Head of caudate nucleus (tissue), 42 donors: ENCODE measurements at regions of chr4 and their contacts with region 1.

Region 1: DNA sequence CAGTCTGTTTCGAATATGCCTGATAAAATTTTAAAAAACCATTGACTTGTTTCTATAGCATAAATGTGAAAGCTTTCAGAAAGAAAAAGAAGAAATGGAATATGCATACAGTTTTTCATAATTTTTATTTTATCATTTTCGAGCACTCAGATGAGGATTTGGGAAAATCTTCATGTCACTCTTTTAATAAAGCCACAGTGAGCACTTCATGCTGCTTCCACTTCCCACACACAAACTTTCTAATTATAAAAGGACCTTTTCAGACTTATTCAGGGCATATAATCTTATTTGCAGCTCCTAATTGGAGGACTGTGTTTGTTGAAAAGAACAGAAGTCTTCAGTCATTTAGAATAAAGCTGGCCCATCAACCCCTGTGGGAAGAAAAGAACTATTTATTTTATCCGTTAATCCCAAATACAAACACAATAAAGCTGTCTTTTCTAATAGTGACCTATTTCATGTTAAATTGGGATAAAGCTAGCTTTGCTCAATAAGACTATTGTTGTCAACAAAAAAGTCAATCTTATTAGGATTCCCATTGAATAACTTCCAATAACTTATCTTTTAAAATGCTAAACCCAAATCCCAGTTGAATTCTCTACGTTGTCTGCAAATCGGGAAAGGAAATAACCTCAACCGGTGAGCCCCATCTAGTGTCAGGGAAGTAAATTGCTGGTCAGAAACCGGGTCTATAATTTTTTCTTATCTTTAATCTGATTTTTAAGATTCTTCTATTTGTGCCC is 211.5 kb downstream of the PDGFRA start:
- DNase-seq: peak in 35 of 42 donors; percentile 14 to 82 (median 51)

Region 2: DNA sequence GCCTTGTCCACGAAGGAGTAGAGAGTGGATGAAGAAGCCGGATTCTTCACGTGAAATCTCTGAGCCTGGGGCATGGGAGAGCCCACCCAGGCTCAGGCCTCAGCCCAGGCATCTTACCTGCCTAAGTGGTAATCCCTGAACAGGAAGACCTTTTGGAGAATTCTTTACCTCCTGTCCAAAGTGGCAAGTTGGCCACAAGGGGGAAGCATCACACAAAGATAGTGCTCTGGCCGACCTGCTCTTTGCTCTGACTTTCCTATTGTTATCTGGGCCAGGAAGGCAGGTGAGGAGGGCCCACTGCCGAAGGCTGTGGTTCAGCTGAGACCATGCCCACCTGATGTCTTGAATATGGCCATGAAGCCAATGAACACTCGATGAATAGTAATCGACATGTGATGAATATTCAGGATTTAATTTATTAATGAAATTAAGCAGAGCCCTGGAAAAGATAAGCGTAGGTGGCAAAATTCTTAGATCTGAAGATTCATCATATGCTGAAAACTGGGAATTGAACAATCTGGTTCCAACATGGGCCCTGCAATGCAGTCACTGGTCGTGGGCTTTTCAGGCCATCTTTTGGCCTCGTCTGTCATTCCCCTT is 117.6 kb before region 1 on chr4:
- intact Hi-C with region 1: loop called (anchors 2 kb)
- DNase-seq: peak; percentile 57 to 91 (median 78)

Region 3: DNA sequence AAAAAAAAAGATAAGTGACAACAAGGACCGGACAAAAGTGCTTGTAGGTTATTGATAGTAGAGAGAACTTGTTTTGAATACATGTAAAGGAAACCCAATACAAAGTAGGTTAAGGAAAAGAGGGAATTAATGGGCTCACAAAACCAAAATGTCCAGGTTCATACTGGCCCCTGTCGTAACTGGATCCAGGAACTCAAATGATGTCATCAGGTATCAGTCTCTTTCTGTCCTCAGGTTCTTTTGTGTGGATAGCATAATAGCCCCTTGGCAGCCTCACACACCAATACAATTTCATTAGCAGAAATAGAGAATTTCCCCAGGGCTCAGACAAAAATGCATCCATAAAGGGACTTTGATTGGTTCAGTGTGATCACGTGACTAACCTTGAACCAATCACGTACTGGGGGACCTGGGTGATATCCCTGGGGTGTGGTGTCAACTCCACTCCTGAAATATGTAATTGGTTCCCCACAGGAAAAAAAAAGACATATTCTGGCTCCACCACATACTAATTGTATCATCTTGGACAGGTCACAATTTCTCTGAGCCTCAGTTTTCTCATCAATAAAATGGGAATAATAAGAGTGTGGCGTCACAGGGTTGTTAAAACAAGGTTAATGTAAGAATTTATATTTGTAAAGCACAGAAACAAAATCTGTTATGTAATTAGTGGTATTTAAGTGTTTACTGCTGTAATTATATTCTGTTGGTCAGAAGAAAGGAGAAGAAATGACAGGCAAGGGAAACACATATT is 36.7 kb before region 1 on chr4:
- intact Hi-C with region 1: no loop called
- DNase-seq: no peak